ENCODE measurements at regions of chr9 and their contacts with region 1.

Region 1: GRCh38 chr9:122453677-122454135 is 24.0 kb downstream of the OR1J1 start:
- DNase-seq: no peak

Region 2: DNA sequence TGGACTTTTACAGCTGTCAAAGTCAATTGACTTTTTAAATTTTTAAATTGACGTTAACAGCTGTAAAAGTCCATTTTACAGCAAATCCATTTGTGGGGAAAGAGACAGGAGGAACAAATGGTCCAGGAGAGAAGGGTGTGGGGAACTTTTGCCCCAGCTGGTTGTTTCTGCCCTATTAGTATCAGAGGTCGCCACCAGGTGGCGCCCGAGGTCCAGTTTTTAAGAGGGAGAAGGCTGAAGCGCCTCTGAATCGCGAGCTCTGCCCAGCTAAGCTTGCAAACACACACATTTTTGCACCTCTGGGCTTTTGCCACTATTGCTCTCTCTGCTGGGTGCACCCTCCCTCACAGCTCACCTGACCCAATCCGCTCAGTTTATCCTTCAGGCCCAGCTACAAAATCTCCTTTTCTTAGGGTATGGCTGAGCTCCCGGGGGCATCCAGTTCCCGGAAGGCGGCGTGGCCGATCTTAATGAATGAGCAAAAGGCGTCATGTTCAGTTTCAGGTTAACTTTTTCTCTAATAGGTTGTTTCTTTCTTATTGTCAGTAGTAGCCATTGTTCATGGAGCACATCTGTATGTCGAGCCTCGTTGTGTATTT is 354.3 kb before region 1 on chr9:
- intact Hi-C with region 1: loop called (anchors 1 kb)
- DNase-seq: peak; percentile 64 to 97 (median 88)

Region 3: DNA sequence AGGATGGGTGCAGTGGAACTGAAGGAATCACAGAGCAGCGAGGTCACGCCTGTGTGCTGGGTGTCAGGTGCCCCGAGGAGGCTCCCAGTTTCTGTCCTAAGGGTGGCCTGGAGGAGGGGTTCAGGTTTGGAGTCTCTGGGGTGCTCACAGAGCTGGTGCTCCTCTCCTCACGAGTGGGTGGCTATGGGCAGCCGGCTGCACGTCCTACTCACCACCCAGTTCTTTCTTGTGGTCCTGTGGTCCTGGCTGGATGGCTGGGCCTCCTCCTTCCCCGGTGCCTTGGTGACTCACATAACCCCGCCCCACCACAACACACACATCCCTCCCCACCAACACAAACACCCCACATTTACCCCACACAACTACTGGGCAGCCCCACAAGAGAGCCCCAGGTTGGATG is 92.8 kb before region 1 on chr9:
- intact Hi-C with region 1: loop called (anchors 10 kb)
- DNase-seq: peak in 3 of 10 donors; percentile 48 to 77 (median 52)

Region 4: DNA sequence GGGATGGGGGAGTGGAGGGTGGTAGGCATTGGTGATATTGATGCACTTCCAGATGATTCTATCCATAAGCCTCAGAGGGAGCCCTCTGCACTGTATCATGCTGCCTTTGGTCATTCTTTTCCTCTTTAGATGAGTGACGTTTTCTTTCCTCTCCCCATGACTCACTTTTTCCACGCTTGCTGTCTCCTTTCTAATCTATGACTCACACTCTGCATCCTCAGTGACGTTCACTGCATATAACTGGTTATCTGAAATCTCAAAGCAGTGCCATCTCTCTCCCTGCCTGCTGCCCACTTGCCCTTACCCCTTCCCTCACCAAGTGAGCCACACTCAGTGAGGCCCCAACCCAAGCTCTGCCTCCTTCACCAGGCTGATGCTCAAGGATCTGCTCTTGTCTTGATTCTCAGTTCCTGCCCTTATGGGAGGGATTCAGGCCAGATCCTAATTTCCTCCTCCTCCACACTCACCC is 51.3 kb before region 1 on chr9:
- intact Hi-C with region 1: no loop called
- DNase-seq: no peak